Tibial artery (tissue), 4 donors: ENCODE measurements at regions of chr19 and their contacts with region 1.

Region 1: GRCh38 chr19:46487802-46488445 is 7.7 kb downstream of the PNMA8B start:
- DNase-seq: peak; percentile 76 to 86
- H3K4me3 ChIP-seq: peak overlapping the region; percentile 43 to 55
- H3K27ac ChIP-seq: peak overlapping the region in 1 of 2 donors; percentile 43
- H3K4me1 ChIP-seq: peaks cover 0 to 42% (median 34%) of the 10 kb centered on the region in 4 donors
- H3K27me3 ChIP-seq: peaks cover 0 to 12% of the 10 kb centered on the region in 2 donors
- CTCF ChIP-seq: peak; percentile 96 to 100

Region 2: DNA sequence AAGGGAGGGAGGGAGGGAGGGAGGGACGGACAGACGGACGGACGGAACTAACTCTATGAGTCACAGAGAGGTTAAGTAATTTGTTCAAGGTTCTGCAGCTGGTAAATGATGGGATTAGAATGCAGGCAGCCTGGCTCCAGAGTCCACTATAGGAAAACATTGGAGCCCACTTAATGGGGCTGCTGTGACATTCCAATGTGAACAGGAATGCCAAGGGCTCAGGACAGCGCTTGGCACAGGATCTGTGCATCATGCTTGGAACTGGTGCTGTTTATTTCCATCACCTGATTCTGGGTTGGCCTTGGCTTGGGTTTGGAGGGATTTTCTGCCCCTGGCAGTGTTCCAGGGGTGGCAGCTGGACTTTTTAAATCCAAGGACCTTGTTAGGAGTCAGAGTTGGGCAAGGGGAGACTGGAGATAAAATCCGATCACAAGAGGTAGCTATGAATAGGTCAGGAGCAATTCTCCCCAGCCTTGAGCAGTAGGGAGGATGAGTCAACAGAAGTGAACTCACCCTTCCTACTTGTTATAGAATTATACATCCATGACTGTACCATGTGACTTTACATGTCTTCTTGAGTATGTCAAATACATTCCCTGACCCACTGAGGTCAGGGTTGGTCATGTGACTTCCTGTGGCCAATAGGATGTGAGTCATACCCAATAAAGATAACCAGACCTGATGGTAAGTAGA is 198.9 kb before region 1 on chr19:
- intact Hi-C with region 1: loop called (anchors 5 kb)
- DNase-seq: peak; percentile 34 to 81
- H3K4me3 ChIP-seq: no peak overlapping the region
- H3K27ac ChIP-seq: peak overlapping the region; percentile 20 to 63
- H3K4me1 ChIP-seq: peaks cover 0 to 10% (median 6%) of the 10 kb centered on the region in 4 donors
- H3K27me3 ChIP-seq: no peaks in the 10 kb centered on the region
- CTCF ChIP-seq: no peak

Region 3: DNA sequence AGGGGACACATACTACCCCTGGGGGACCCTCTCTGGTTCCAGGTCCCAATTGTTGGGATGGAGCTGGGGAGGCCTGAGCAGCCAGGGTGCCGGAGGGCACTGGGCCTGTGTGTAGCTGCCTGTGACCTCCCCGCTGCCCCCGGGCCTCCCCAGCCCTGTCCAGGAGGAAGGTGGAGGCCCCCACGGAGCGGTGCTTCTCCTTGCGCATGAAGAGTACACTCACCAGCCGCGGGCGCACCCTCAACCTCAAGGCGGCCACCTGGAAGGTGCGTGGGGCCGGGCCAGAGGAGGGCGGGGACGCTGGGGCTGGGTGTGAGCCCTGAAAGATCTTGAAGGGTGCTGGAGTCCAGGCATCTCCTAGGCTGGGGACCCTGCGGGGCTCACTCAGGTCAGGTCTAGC is 179.4 kb before region 1 on chr19:
- intact Hi-C with region 1: no loop called
- DNase-seq: no peak
- H3K4me3 ChIP-seq: no peak overlapping the region
- H3K27ac ChIP-seq: peak overlapping the region; percentile 13 to 15
- H3K4me1 ChIP-seq: peaks cover 0 to 16% (median 5%) of the 10 kb centered on the region in 4 donors
- H3K27me3 ChIP-seq: no peaks in the 10 kb centered on the region
- CTCF ChIP-seq: no peak

Region 4: DNA sequence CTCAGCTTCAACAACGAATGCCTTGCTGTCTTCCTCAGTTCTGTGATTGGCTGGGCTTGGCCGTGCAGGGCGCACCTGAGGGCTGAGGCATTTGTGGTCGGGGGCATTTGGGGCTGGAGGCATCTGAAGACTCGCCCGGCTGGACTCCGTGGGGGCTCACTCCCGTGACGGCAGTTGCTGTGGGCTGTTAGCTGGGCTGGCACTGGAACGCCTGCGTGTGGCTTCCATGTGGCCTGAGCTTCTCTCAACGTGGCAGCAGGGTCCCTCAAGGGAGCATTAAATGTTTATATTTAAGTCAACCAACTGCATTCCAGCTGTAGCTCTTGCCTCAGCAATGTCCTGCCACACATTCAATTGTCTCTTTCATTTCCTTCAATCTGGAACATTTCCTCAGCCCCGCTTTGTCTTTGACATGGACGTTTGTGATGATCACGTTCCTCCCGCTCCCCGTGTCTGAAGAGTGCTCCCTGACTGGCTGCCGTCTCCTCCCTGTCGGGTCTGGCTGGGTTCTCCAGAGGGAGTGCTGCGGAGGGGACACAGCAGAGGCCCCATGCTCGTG is 95.6 kb before region 1 on chr19:
- intact Hi-C with region 1: loop called (anchors 2 kb)
- DNase-seq: peak in 1 of 2 donors; percentile 71
- H3K4me3 ChIP-seq: no peak overlapping the region
- H3K27ac ChIP-seq: peak overlapping the region; percentile 55 to 70
- H3K4me1 ChIP-seq: peaks cover 0 to 39% (median 23%) of the 10 kb centered on the region in 4 donors
- H3K27me3 ChIP-seq: no peaks in the 10 kb centered on the region
- CTCF ChIP-seq: no peak

Region 5: DNA sequence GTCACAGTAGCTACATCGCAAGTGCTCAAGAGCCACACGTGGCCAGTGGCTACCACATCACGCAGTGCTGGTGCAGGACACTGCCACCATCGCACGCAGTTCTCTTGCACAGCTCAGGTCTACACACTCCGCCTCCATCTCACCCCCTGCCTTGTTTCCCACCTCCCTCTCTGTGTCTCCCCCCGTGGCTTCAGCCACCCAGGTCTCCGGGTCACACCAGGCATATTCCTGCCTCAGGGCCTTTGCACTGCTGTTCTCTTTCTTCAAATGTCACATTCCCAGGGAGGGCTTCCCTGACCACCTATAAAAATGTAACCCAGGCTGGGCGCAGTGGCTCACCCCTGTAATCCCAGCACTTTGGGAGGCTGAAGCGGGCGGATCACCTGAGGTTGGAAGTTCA is 85.2 kb before region 1 on chr19:
- intact Hi-C with region 1: loop called (anchors 2 kb)
- DNase-seq: no peak
- H3K4me3 ChIP-seq: no peak overlapping the region
- H3K27ac ChIP-seq: peak overlapping the region in 1 of 2 donors; percentile 23
- H3K4me1 ChIP-seq: peaks cover 0 to 44% (median 33%) of the 10 kb centered on the region in 4 donors
- H3K27me3 ChIP-seq: no peaks in the 10 kb centered on the region
- CTCF ChIP-seq: no peak

Region 6: GRCh38 chr19:46413262-46414031 is 74.5 kb before region 1 on chr19 and contains the start of gene CCDC8:
- intact Hi-C with region 1: no loop called
- DNase-seq: peak; percentile 79 to 93
- H3K4me3 ChIP-seq: peak within 1 kb of the TSS; percentile 58 to 71
- H3K27ac ChIP-seq: peak within 1 kb of the TSS; percentile 81 to 85
- H3K4me1 ChIP-seq: peaks cover 3 to 69% (median 43%) of the 10 kb centered on the region in 4 donors
- H3K27me3 ChIP-seq: no peaks in the 10 kb centered on the region
- CTCF ChIP-seq: no peak

Region 7: GRCh38 chr19:46542428-46543230 is 54.7 kb after region 1 on chr19:
- intact Hi-C with region 1: no loop called
- DNase-seq: peak; percentile 94 to 99
- H3K4me3 ChIP-seq: no peak overlapping the region
- H3K27ac ChIP-seq: no peak overlapping the region
- H3K4me1 ChIP-seq: no peaks in the 10 kb centered on the region
- H3K27me3 ChIP-seq: no peaks in the 10 kb centered on the region
- CTCF ChIP-seq: peak; percentile 94 to 95